ENCODE measurements at regions of chr7 and their contacts with region 1.

Region 1: DNA sequence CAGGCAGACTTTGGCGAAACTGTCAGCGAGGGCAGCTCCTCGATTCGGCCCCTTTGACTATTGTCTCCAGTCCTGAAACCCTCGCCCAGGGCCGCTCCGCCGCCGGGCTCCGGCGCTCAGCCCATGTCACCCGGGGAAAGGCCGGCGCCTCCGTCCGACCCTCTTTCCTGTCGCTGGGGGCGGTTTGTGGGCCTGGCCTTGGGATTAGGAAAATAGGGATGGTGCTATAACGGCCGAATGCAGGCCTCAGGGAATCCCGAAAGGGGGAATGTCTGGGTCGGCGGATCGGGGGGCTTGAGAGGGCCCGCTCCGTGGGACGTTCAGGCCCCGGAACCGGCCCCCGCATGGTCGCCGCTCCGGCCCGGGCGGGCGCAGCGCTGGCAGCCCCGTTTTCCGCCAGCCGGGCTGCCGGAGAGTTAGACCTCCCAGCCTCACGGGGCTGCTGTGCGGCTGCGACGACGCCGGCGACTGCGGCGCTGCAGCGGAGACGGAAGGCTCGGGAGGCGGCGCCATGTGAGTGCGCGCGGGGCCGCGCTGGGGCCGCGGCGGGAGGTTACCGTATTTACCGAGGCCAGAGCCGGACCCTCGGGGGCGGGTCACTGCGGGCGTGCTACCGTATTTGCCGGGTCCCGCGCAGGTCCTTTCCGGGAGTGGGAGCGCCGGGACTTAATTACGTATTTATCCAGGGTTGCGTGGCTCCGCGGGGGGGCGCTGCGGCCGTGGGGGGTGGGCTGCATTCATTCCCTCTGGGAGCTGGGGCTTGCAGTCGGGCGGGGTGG is 25.9 kb downstream of the ZNF775 start:
- DNase-seq: peak; percentile 88 to 93
- H3K4me3 ChIP-seq: peak overlapping the region; percentile 74 to 93
- H3K27ac ChIP-seq: peak overlapping the region; percentile 97 to 98
- H3K4me1 ChIP-seq: peaks cover 0 to 29% (median 23%) of the 10 kb centered on the region in 4 donors
- H3K27me3 ChIP-seq: no peaks in the 10 kb centered on the region
- CTCF ChIP-seq: no peak

Region 2: DNA sequence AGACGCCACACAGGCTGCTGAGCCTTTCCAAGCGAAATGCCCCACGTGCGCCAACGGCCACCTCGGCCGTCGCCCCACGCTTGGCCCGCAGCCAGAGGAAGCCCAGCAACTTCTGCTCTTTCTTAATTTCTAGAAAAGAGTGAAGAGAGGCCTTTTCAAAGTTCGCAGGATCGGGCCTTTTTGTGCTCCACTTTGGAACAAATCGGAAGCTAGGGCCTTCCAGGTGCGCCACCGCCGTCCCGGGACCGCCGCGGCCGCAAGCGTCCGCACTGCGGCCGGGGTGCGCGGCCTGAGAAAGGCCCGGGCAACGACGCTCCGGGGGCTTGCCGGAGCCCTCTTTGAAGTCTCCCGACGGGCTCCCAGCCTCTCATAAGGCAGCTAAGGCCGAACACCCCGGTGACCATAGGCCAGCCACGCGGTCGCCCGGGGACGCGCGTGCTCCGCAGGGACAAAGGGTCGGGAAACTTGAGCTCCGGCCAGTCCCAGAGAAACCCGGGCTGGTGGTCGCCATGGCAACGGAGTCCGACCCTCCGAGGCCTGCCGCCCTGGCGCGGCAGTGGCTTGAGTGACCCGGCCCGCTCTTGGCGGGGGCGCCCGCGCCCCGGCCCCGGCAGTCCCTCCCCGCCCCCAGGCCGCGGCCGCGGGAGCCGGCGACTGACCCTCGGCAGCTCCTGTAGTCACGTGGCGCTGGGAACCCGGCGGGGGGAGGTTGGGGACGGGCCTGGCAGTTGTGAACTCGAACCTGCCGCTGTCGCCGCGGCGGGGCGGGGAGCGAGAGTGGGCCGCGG is 36.7 kb before region 1 on chr7 and contains the start of gene REPIN1:
- intact Hi-C with region 1: loop called (anchors 2 kb)
- DNase-seq: peak; percentile 91 to 96
- H3K4me3 ChIP-seq: peak within 1 kb of the TSS; percentile 66 to 74
- H3K27ac ChIP-seq: peak within 1 kb of the TSS; percentile 89 to 95
- H3K4me1 ChIP-seq: peaks cover 0 to 40% (median 22%) of the 10 kb centered on the region in 4 donors
- H3K27me3 ChIP-seq: no peaks in the 10 kb centered on the region
- CTCF ChIP-seq: no peak

Region 3: DNA sequence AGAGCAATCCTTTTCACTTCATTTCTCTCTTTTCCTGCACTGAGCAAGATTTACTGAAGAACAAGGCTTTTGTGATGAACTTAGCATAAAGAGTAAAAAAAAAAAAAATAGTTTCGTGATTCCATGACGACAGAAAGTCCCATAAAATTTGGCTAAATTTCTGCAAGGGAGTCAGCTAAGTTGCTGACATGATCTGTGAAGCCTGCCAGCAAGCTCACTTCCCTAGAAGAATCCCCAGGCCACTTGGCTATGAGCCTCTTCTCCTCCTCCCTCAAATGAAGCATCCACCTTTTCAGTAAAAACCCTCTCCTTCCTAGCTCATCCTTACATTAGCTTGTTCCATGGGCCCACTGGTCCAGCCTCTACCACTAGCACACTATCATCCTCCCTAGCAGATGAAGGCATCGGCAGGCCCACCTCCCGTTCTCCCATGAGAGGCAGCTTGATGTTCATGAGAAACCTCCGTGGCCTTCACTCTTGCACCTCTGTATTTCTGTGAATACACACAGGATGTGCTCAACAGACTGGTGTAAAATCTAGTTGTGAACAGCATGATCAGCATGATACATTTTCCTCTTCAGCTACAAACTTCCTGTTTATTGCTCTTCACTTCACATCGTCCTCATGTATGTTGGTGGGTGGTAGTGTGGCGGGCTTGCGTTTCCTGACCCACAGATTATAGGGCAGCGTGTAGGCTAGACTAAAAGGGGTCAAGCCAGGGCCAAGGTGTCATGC is 76.4 kb after region 1 on chr7:
- intact Hi-C with region 1: no loop called
- DNase-seq: no peak
- H3K4me3 ChIP-seq: no peak overlapping the region
- H3K27ac ChIP-seq: no peak overlapping the region
- H3K4me1 ChIP-seq: no peaks in the 10 kb centered on the region
- H3K27me3 ChIP-seq: no peaks in the 10 kb centered on the region
- CTCF ChIP-seq: no peak

Measured in tibial artery (tissue), 4 donors.